ENCODE measurements at regions of chr1 and their contacts with region 1.

Region 1: GRCh38 chr1:210246447-210246846 is 13.9 kb downstream of the SERTAD4 start:
- DNase-seq: no peak
- H3K4me3 Mint-ChIP-seq: no peak overlapping the region
- H3K27ac Mint-ChIP-seq: no peak overlapping the region
- H3K4me1 Mint-ChIP-seq: peaks cover 29% of the 10 kb centered on the region
- H3K27me3 Mint-ChIP-seq: peaks cover 64% of the 10 kb centered on the region

Region 2: GRCh38 chr1:210214573-210215409 is 31.7 kb before region 1 on chr1:
- intact Hi-C with region 1: no loop called
- DNase-seq: no peak
- H3K4me3 Mint-ChIP-seq: no peak overlapping the region
- H3K27ac Mint-ChIP-seq: no peak overlapping the region
- H3K4me1 Mint-ChIP-seq: no peaks in the 10 kb centered on the region
- H3K27me3 Mint-ChIP-seq: peaks cover 8% of the 10 kb centered on the region

Region 3: GRCh38 chr1:210233216-210234020 is 13.0 kb before region 1 on chr1:
- intact Hi-C with region 1: loop called (anchors 2 kb)
- DNase-seq: no peak
- H3K4me3 Mint-ChIP-seq: peak overlapping the region; percentile 45
- H3K27ac Mint-ChIP-seq: no peak overlapping the region
- H3K4me1 Mint-ChIP-seq: peaks cover 6% of the 10 kb centered on the region
- H3K27me3 Mint-ChIP-seq: peaks cover 48% of the 10 kb centered on the region

Measured in activated T-helper 1 cell treated with anti-CD3 and anti-CD28 coated beads, Interleukin-12 subunit alpha, Interleukin-12 subunit beta, Interleukin-2, Interleukin-4 antibody, amounts not matched to agents 30 ng/mL and 10 ng/mL and 1 ng/mL, durations not matched to agents 14 hours and 24 hours and 36 hours (primary cell).